ENCODE measurements at regions of chr5 and their contacts with region 1.

Region 1: GRCh38 chr5:6745706-6746222 is 32.5 kb downstream of the TENT4A start:
- DNase-seq: peak; percentile 61
- H3K4me3 ChIP-seq: no peak overlapping the region
- CTCF ChIP-seq: peak; percentile 81

Region 2: DNA sequence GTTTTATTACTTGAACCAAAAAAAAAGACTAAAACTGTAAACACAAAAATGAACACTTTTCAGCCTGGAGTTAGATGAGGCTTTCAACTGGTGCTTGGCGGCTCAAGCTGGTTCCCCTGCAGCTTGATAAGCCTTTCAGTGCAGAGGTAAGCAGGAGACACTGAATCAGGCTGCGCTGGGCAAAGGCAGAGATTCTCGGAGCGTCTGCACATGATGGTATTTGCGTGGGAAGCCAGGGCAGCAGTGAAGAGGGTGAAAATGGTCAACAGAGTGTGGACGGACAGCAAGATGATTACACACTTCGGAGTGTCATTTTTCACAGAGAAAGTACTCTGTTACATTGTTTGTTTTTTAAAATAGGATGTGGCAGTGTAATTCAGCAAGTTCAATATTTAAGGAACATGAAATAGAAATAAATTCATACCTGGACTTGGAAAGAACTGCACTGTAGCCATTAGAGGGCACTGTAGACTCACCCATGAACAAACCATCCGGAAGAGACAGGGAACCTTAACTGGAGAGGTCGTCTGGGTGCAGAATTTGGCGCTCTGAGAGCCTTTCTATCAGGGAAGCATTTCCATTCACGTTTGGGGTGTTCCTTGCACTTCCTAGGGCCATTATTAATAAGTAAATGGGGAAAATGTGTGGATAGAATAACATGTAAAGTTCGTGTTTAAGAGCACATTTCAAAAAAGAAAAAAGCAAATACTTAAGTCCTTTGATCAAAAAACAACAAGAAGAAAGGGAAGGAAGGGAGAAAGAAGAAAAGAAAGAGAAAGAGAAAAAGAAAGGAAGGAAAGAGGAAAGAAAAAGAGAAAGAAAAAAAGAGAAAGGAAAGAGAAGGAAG is 1253.5 kb before region 1 on chr5:
- in situ Hi-C with region 1: loop called (anchors 25 kb)
- DNase-seq: peak; percentile 47
- H3K4me3 ChIP-seq: no peak overlapping the region
- CTCF ChIP-seq: peak; percentile 73

Region 3: DNA sequence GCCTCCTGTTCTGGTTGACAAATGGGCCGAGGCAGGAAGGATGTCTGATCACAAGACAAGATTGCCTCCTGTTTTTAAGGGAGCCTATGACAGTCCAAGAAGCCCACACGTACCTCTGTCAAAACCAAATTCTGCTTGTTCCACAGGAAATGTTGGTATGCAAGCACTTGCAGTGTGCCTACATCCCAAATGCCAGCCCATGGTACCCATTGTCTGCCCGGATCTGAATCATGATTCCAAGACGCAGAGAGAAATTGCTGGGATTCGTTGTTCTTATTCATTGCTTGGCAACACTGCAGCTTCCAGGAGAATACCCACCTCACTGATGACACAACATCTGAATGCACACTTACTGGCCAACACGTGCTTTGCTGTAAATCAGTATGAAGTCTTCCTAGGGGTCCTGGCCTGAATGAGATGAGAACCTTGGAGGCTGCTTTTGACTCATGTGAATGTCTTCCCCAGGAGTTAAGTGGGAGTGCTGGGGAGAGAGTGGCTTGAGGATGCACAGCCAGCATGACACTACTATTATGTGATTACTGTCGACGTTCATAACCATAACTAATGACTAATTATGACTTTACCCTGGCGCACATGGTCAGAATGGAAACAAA is 101.0 kb before region 1 on chr5:
- in situ Hi-C with region 1: loop called (anchors 5 kb)
- DNase-seq: peak; percentile 38
- H3K4me3 ChIP-seq: no peak overlapping the region
- CTCF ChIP-seq: no peak

Measured in astrocyte of the cerebellum (primary cell).